PC-3 (cell line): ENCODE measurements at regions of chr14 and their contacts with region 1.

Region 1: DNA sequence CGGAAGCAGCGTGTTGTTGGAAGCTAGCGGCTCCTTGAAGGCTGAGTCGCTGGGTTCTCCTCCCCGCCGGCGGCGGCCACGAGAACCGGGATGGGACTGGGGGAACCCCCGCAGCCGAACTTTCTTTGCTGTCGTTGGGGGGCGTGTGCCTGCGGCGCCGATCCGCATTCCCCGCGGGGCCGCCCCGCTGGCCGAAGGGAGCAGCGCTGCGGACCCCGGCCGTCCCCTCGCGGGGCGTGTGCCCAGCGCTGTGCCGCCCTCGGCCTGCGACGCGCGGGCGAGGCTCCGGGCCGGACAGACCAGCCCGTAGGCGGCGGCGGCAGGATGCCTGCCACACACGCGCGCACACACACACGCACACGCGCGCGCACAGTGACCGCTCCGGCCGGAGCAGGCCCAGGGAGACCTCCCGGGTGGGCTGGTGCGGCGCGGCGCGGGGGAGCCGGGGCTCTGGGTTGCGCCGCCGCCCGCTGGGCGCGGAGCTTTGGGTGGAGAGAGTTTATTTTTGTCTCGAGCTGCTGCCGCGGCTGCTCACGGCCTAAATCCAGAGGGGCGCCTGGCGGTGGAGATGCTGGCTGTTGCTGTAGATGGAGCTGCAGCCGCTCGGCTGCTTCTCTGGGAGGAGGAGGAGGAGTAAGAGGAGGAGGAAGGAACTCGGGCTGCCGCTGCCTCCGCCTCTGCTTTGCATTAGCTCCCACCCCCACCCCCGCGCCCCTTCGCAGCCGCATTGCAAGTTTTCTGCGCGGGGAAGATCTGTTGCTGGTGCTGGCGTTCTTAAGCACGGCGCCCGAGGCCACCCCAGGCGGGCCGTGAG is at the start of gene SAMD4A:
- DNase-seq: peak; percentile 95
- ATAC-seq: peak; percentile 33
- H3K4me3 ChIP-seq: peak within 1 kb of the TSS; percentile 85
- H3K27ac ChIP-seq: peak within 1 kb of the TSS; percentile 79
- H3K4me1 ChIP-seq: peaks cover 42% of the 10 kb centered on the region
- H3K27me3 ChIP-seq: no peaks in the 10 kb centered on the region
- CTCF ChIP-seq: peak; percentile 53; the same call in 1 of the 2 replicates
- total RNA-seq, gene SAMD4A: 42.9 and 45.2 TPM in 2 replicates

Region 2: GRCh38 chr14:54147282-54147681 is 419.3 kb before region 1 on chr14:
- CTCF ChIA-PET with region 1: no interaction called
- POLR2A ChIA-PET with region 1: no interaction called
- intact Hi-C with region 1: no loop called
- DNase-seq: peak; percentile 94
- ATAC-seq: peak; percentile 81
- H3K4me3 ChIP-seq: no peak overlapping the region
- H3K27ac ChIP-seq: no peak overlapping the region
- H3K4me1 ChIP-seq: peaks cover 8% of the 10 kb centered on the region; the same call in 1 of the 2 replicates
- H3K27me3 ChIP-seq: no peaks in the 10 kb centered on the region
- CTCF ChIP-seq: no peak

Region 3: GRCh38 chr14:54329082-54329695 is 237.4 kb before region 1 on chr14:
- CTCF ChIA-PET with region 1: no interaction called
- POLR2A ChIA-PET with region 1: no interaction called
- intact Hi-C with region 1: no loop called
- DNase-seq: peak; percentile 96
- ATAC-seq: peak; percentile 98
- H3K4me3 ChIP-seq: no peak overlapping the region
- H3K27ac ChIP-seq: no peak overlapping the region
- H3K4me1 ChIP-seq: peaks cover 17% of the 10 kb centered on the region
- H3K27me3 ChIP-seq: no peaks in the 10 kb centered on the region
- CTCF ChIP-seq: peak; percentile 100

Region 4: GRCh38 chr14:54366736-54367735 is 199.6 kb before region 1 on chr14:
- CTCF ChIA-PET with region 1: interaction called, 5 read pairs
- POLR2A ChIA-PET with region 1: interaction called, 6 read pairs
- intact Hi-C with region 1: loop called (anchors 2 kb)
- DNase-seq: peak; percentile 88
- ATAC-seq: peak; percentile 71
- H3K4me3 ChIP-seq: no peak overlapping the region
- H3K27ac ChIP-seq: no peak overlapping the region
- H3K4me1 ChIP-seq: peaks cover 60% of the 10 kb centered on the region
- H3K27me3 ChIP-seq: no peaks in the 10 kb centered on the region
- CTCF ChIP-seq: peak; percentile 98

Region 5: DNA sequence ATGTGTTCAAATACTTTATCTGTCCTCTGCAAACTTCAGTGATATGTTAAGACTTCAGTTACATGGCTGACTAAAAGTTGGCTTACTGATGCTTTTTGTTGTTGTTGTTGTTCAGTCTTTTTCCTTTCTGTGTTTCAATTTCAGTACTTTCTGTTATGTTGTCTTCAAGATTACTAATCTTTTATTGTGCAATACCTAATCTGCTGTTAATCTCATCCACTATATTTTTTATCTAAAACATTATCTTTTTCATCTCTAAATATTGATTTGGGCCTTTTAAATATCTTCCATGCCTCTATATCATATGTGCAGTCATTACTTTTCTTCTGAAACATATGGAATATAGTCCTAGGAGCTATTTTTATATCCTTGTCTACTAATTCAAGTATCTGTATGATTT is 49.9 kb before region 1 on chr14:
- CTCF ChIA-PET with region 1: no interaction called
- POLR2A ChIA-PET with region 1: no interaction called
- intact Hi-C with region 1: no loop called
- DNase-seq: no peak
- ATAC-seq: no peak
- H3K4me3 ChIP-seq: no peak overlapping the region
- H3K27ac ChIP-seq: no peak overlapping the region
- H3K4me1 ChIP-seq: no peaks in the 10 kb centered on the region
- H3K27me3 ChIP-seq: no peaks in the 10 kb centered on the region
- CTCF ChIP-seq: no peak

Region 6: GRCh38 chr14:54591461-54591860 is 24.8 kb after region 1 on chr14:
- CTCF ChIA-PET with region 1: interaction called, 3 read pairs
- POLR2A ChIA-PET with region 1: interaction called, 20 read pairs
- intact Hi-C with region 1: no loop called
- DNase-seq: peak; percentile 93
- ATAC-seq: peak; percentile 67
- H3K4me3 ChIP-seq: no peak overlapping the region
- H3K27ac ChIP-seq: peak overlapping the region; percentile 21
- H3K4me1 ChIP-seq: peaks cover 60% of the 10 kb centered on the region
- H3K27me3 ChIP-seq: no peaks in the 10 kb centered on the region
- CTCF ChIP-seq: no peak

Region 7: DNA sequence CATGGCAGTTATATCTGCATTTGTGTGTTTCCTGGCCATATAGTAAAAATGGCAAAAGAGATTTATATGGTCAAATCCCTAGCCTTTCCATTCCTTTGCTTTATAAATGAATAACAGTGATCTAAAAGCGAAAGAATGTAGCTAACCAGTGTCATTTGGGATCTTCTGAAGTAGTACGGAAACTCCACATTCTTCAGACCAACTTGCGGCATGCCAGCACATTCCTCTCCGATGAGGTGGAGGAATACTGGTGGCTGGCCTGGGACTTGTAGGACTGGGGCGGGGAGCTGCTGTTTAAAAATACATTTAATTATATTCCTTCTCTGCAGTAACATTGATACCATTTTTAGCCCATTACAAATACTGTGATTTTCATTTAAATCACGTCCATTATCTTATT is 85.6 kb after region 1 on chr14:
- CTCF ChIA-PET with region 1: interaction called, 7 read pairs
- POLR2A ChIA-PET with region 1: interaction called, 14 read pairs
- intact Hi-C with region 1: loop called (anchors 2 kb)
- DNase-seq: peak; percentile 100
- ATAC-seq: peak; percentile 97
- H3K4me3 ChIP-seq: peak overlapping the region; percentile 45
- H3K27ac ChIP-seq: peak overlapping the region; percentile 90
- H3K4me1 ChIP-seq: peaks cover 62% of the 10 kb centered on the region
- H3K27me3 ChIP-seq: no peaks in the 10 kb centered on the region
- CTCF ChIP-seq: no peak

Region 8: GRCh38 chr14:54683882-54684794 is 117.5 kb after region 1 on chr14:
- CTCF ChIA-PET with region 1: interaction called, 10 read pairs
- POLR2A ChIA-PET with region 1: interaction called, 11 read pairs
- intact Hi-C with region 1: loop called (anchors 1 kb)
- DNase-seq: peak; percentile 65
- ATAC-seq: peak; percentile 61
- H3K4me3 ChIP-seq: no peak overlapping the region
- H3K27ac ChIP-seq: peak overlapping the region; percentile 31
- H3K4me1 ChIP-seq: peaks cover 38% of the 10 kb centered on the region
- H3K27me3 ChIP-seq: no peaks in the 10 kb centered on the region
- CTCF ChIP-seq: no peak

Region 9: GRCh38 chr14:54773171-54773975 is 206.8 kb after region 1 on chr14:
- CTCF ChIA-PET with region 1: interaction called, 154 read pairs
- POLR2A ChIA-PET with region 1: interaction called, 32 read pairs
- intact Hi-C with region 1: loop called (anchors 1 kb)
- DNase-seq: peak; percentile 100
- ATAC-seq: peak; percentile 90
- H3K4me3 ChIP-seq: peak overlapping the region; percentile 44
- H3K27ac ChIP-seq: peak overlapping the region; percentile 85
- H3K4me1 ChIP-seq: peaks cover 30% of the 10 kb centered on the region
- H3K27me3 ChIP-seq: no peaks in the 10 kb centered on the region
- CTCF ChIP-seq: peak; percentile 96

Region 10: DNA sequence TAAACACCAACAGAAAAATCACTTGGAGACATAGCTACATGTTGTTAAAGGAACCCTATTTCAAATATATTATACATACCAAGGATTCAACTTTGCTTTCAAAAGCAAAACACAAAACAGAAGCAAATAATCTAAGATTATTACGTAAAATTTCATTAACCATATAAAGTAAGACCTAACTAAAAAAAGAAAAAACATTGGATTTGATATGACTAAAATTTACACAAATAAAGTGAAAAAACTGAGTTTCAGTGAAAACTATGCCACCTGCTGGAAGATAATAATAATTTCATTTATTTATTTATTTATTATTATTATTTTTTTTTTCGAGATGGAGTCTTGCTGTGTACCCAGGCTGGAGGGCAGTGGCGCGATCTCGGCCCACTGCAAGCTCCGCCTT is 415.1 kb after region 1 on chr14:
- CTCF ChIA-PET with region 1: no interaction called
- POLR2A ChIA-PET with region 1: no interaction called
- intact Hi-C with region 1: loop called (anchors 5 kb)
- DNase-seq: peak; percentile 42
- ATAC-seq: no peak
- H3K4me3 ChIP-seq: no peak overlapping the region
- H3K27ac ChIP-seq: no peak overlapping the region
- H3K4me1 ChIP-seq: no peaks in the 10 kb centered on the region
- H3K27me3 ChIP-seq: no peaks in the 10 kb centered on the region
- CTCF ChIP-seq: peak; percentile 59